ENCODE measurements at regions of chr3 and their contacts with region 1.

Region 1: GRCh38 chr3:52014613-52015012 is 18.9 kb upstream of the RPL29 start:
- DNase-seq: no peak
- H3K4me3 ChIP-seq: no peak overlapping the region
- H3K27ac ChIP-seq: no peak overlapping the region
- H3K4me1 ChIP-seq: peaks cover 11% of the 10 kb centered on the region
- H3K27me3 ChIP-seq: no peaks in the 10 kb centered on the region
- CTCF ChIP-seq: peak; percentile 33 to 39
- POLR2A ChIP-seq: no peak

Region 2: DNA sequence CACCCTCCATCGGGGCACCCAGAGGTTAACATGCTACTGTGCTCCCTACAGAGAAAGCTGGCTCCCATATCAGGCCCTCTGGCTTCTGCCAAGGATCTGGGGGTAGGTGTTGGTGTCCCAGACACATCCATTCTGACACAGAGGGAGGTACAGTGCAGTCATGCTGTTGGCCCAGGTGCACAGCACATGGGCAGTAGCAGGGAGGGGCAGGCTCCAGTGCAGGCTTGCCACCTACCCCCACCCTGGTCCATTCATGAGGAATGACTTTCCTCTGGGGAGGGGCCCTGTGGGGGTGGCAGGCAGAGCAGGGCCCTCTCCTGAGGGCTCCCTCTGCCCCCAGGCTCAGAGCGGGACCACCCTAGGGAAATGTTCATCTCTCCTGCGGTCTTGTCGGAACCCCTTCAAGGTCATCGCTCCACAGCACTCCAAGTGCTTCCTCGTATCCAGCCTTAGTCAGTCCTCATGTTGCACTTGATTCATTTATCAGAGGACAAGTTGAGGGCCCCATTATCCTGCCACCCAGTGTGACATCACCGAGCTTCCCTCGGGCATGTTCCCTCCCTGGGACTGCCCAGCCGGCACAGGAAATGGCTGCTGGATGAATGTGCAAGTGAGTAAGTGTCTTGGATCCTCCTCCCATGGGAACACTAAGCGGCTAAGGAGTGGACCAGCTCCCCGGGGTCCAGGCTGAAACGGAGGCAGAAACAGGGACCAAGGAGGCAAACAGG is 31.7 kb after region 1 on chr3:
- CTCF ChIA-PET with region 1: interaction called, 260 read pairs
- POLR2A ChIA-PET with region 1: interaction called, 4 read pairs
- dilution Hi-C with region 1: no loop called
- intact Hi-C with region 1: loop called (anchors 1 kb)
- DNase-seq: peak; percentile 96
- H3K4me3 ChIP-seq: no peak overlapping the region
- H3K27ac ChIP-seq: peak overlapping the region; percentile 86
- H3K4me1 ChIP-seq: peaks cover 28% of the 10 kb centered on the region
- H3K27me3 ChIP-seq: no peaks in the 10 kb centered on the region
- CTCF ChIP-seq: no peak
- POLR2A ChIP-seq: peak; percentile 75

Region 3: DNA sequence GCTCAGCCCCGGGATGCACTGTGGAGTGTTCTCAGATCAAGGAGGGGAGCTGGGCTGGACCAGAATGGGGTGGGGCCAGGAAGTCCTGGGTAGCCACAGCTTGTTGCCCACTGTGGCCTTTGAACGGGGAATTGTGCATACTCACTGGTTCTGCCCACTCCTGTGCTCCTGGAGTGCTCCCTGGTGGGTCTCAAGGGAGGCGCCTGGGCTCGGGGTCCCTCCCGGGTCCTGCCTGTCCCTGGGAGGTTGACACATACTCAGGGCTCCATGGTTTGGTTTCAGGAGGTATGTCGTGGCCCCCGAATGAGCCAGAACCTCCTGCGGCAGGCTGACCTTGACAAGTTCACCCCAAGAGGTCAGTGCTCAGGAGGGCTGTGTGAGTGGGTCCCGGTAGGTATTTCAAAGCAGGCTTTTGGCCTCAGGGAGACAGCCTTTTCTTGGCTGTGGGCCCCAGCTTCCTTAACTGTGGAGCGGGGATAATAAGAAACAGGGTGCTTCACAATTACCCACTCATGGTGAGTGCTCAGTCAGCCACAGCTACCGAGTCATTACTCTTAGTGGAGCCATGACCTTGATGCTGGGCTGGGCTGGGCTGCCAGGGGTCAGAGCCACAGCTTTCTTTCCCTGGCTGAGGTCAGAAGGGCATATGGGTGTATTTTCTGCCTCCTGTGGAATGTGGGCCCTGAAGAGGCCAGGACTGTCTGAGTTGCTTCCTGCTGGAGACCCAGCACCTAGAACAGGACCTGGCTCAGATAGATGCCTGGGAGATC is 309.1 kb after region 1 on chr3:
- CTCF ChIA-PET with region 1: no interaction called
- POLR2A ChIA-PET with region 1: no interaction called
- dilution Hi-C with region 1: no loop called
- intact Hi-C with region 1: no loop called
- DNase-seq: no peak
- H3K4me3 ChIP-seq: no peak overlapping the region
- H3K27ac ChIP-seq: no peak overlapping the region
- H3K4me1 ChIP-seq: no peaks in the 10 kb centered on the region
- H3K27me3 ChIP-seq: no peaks in the 10 kb centered on the region
- CTCF ChIP-seq: no peak
- POLR2A ChIP-seq: no peak

Measured in endothelial cell of umbilical vein (primary cell).